Thyroid gland (tissue), 4 donors: ENCODE measurements at regions of chr3 and their contacts with region 1.

Region 1: GRCh38 chr3:69558912-69559311 is 173.0 kb upstream of the FRMD4B start:
- DNase-seq: peak; percentile 48 to 67
- H3K4me3 ChIP-seq: no peak overlapping the region
- H3K27ac ChIP-seq: peak overlapping the region in 2 of 3 donors; percentile 3 to 39
- H3K4me1 ChIP-seq: peaks cover 29 to 62% of the 10 kb centered on the region in 2 donors
- H3K27me3 ChIP-seq: no peaks in the 10 kb centered on the region
- CTCF ChIP-seq: no peak
- POLR2A ChIP-seq: no peak

Region 2: DNA sequence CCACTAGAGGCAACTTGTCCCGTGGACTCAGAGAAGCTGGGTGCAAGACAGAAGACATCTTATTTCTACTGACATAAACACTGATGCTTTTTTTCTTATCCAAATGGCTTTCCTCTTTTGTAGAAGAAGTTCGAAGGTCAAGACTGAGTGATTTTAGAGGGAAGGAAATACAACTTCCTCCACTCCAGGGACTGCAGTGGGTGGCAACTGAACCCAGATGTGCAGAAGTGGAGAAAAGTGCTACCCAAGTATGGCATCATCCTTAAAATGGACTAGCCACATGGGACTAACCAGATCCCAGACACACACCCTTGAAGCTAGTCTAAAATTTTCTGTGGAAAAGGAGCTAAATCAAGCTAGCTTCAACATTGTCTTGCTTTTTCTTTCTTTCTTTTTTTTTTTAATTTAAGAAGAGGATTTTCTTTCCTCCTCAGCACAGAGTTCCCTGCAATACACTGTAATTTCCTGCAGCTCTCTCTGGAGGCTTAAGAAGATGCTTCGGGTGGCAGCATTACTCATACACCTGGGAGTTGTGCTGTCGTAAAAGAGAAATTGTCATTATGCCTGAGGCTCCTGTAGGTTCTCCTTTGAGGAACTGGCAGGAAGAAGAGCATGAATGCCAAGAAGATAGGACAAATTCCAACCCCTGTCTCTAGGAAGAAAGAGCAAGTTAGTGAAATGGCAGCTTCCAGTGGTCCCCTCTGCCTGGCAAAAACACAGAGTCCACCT is 169.2 kb before region 1 on chr3:
- intact Hi-C with region 1: no loop called
- DNase-seq: no peak
- H3K4me3 ChIP-seq: no peak overlapping the region
- H3K27ac ChIP-seq: no peak overlapping the region
- H3K4me1 ChIP-seq: peaks cover 8 to 18% of the 10 kb centered on the region in 2 donors
- H3K27me3 ChIP-seq: no peaks in the 10 kb centered on the region
- CTCF ChIP-seq: no peak
- POLR2A ChIP-seq: no peak

Region 3: DNA sequence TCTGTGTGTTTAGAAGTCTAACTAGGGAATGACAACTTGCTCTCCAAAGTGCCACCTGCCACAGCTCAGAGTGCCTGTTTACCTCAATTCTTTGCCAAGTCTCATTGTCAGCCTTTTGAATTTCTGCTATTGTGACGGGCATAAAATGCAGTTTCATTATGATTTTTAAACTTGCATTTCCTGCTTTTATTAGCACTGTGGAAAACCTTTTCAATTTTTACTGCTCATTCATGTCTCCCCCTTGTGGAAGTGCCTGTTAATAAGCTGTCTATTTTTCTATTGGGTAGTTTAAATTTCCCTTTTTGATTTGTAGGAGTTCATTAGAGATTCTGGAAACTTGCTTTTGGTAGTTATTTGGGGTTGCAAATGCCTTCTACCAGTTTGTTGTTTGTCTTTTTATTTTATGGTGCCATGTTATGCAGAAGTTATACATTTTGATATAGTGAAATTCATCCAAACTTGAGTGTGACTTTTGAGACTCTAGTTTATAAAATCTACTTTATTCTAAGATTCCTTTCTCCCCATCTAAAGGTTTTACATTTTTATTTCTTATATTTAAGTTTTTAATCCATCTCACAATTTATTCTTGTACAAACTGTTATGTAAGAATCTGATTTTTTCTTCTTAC is 119.2 kb before region 1 on chr3:
- intact Hi-C with region 1: no loop called
- DNase-seq: no peak
- H3K4me3 ChIP-seq: no peak overlapping the region
- H3K27ac ChIP-seq: peak overlapping the region; percentile 45 to 82 (median 72)
- H3K4me1 ChIP-seq: peaks cover 47 to 50% of the 10 kb centered on the region in 2 donors
- H3K27me3 ChIP-seq: no peaks in the 10 kb centered on the region
- CTCF ChIP-seq: peak; percentile 39 to 80 (median 60)
- POLR2A ChIP-seq: no peak

Region 4: DNA sequence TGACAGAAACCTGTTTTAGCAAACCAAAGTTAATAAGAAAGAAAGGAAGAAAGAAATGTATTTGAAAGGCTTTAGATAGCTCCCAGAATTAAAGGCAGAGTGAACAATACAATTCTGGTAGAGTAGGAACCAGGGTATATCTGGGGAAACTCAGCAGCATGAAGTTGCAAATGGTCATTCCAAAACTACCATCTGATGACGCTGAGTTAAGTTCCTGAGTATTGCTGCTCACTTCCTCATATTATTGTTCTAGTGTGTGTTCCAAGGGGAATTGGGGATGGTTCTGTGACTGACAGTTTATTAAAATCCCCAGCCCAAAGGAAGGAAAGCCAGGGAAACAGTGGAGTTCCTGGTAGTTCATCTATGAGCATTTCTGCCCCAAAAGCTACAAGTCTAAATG is 84.7 kb before region 1 on chr3:
- intact Hi-C with region 1: no loop called
- DNase-seq: no peak
- H3K4me3 ChIP-seq: no peak overlapping the region
- H3K27ac ChIP-seq: peak overlapping the region in 1 of 3 donors; percentile 13
- H3K4me1 ChIP-seq: peaks cover 21 to 26% of the 10 kb centered on the region in 2 donors
- H3K27me3 ChIP-seq: no peaks in the 10 kb centered on the region
- CTCF ChIP-seq: no peak
- POLR2A ChIP-seq: no peak

Region 5: GRCh38 chr3:69665026-69665737 is 106.3 kb after region 1 on chr3:
- intact Hi-C with region 1: loop called (anchors 10 kb)
- DNase-seq: peak; percentile 52 to 58
- H3K4me3 ChIP-seq: no peak overlapping the region
- H3K27ac ChIP-seq: peak overlapping the region; percentile 18 to 57 (median 54)
- H3K4me1 ChIP-seq: peaks cover 8 to 27% of the 10 kb centered on the region in 2 donors
- H3K27me3 ChIP-seq: no peaks in the 10 kb centered on the region
- CTCF ChIP-seq: no peak
- POLR2A ChIP-seq: no peak